ENCODE measurements at regions of chr22 and their contacts with region 1.

Region 1: DNA sequence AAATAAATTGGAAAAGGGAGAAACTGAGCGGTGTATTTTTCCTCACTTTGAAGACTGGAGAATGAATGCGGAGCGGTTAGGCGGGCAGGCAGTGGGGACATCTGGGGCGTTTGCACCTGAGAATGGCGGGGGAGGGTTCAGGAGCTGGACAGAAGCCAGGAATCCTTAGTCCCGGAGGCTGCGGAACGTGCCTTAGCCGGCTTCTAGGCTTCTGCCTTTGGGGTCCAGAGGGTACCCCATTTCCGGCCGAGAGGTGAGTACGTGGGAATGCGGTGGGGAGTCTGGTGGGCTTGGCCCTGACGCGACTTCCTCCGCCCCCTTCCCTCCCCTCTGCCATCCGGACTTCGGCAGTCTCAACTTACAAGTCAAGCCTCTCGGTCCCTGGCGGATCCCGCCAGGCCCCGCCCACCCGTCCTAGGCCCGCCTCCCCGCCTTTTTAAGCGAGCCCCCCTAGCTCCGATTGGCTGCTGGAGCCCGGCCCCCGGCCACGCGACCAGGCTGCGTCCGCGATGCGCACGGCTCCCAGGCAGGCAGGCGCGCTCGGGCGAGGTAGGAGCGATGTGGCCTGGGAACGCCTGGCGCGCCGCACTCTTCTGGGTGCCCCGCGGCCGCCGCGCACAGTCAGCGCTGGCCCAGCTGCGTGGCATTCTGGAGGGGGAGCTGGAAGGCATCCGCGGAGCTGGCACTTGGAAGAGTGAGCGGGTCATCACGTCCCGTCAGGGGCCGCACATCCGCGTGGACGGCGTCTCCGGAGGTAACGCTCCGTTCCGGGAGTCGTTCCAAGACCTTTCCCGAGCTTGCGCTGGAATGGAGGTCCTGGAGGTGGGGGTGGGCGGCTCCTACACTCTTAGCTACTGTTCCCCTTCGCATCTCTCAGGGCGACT is at the start of gene GCAT:
- DNase-seq: peak; percentile 95
- H3K4me3 Mint-ChIP-seq: peak within 1 kb of the TSS; percentile 90
- H3K27ac Mint-ChIP-seq: peak within 1 kb of the TSS; percentile 64
- H3K4me1 Mint-ChIP-seq: peaks cover 16% of the 10 kb centered on the region
- H3K27me3 Mint-ChIP-seq: peaks cover 16% of the 10 kb centered on the region
- CTCF ChIP-seq: no peak
- total RNA-seq, gene GCAT: 22.7 and 29.9 TPM in 2 replicates

Region 2: DNA sequence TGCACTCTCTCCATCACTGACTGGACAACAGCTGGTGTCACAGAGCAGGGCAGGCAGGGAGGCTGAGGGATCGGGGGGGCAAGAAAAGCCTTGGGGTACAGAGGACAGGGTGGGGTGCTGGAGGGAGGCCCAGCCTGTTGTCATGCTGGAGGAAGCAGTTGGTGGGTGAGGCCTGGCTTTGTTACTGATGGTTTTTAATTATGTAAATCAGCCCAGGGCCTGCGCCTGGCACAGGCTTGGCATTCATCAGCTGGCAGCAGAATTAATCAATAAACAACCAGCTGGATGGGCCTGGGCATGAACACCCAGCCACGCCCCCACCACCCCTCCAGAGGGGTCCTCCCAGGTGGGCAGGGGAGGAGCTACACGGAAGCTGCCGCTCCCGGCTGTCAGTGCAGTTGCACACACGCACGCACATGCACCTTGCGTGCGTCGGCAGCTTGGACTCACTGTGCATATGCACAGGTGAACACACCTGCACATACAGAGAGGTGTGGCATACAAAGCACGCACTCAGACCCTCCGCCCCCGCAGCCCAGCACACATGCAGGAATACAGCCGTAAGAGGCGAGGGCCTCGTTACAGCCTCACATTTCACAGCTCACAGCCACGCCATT is 359.0 kb before region 1 on chr22:
- CTCF ChIA-PET with region 1: no interaction called
- intact Hi-C with region 1: no loop called
- DNase-seq: no peak
- H3K4me3 Mint-ChIP-seq: no peak overlapping the region
- H3K27ac Mint-ChIP-seq: no peak overlapping the region
- H3K4me1 Mint-ChIP-seq: peaks cover 15% of the 10 kb centered on the region
- H3K27me3 Mint-ChIP-seq: no peaks in the 10 kb centered on the region
- CTCF ChIP-seq: no peak

Region 3: GRCh38 chr22:37686002-37686982 is 121.4 kb before region 1 on chr22 and contains the start of gene NOL12:
- CTCF ChIA-PET with region 1: interaction called, 26 read pairs
- intact Hi-C with region 1: no loop called
- DNase-seq: peak; percentile 84
- H3K4me3 Mint-ChIP-seq: peak within 1 kb of the TSS; percentile 94
- H3K27ac Mint-ChIP-seq: peak within 1 kb of the TSS; percentile 72
- H3K4me1 Mint-ChIP-seq: peaks cover 48% of the 10 kb centered on the region
- H3K27me3 Mint-ChIP-seq: no peaks in the 10 kb centered on the region
- CTCF ChIP-seq: no peak
- total RNA-seq, gene NOL12: 23.7 and 26.8 TPM in 2 replicates